Activated CD4-positive, alpha-beta T cell treated with anti-CD3 and anti-CD28 coated beads, Interleukin-2, amount 10 ng/mL, durations not matched to agents 24 days and 14 days (primary cell): ENCODE measurements at regions of chr16 and their contacts with region 1.

Region 1: GRCh38 chr16:53054670-53055485 is at the start of gene CHD9:
- DNase-seq: peak; percentile 93
- H3K4me3 Mint-ChIP-seq: peak within 1 kb of the TSS; percentile 86
- H3K27ac Mint-ChIP-seq: peak within 1 kb of the TSS; percentile 86
- H3K4me1 Mint-ChIP-seq: peaks cover 32% of the 10 kb centered on the region
- H3K27me3 Mint-ChIP-seq: no peaks in the 10 kb centered on the region
- total RNA-seq, gene CHD9: 19.6 and 20.7 TPM in 2 replicates

Region 2: DNA sequence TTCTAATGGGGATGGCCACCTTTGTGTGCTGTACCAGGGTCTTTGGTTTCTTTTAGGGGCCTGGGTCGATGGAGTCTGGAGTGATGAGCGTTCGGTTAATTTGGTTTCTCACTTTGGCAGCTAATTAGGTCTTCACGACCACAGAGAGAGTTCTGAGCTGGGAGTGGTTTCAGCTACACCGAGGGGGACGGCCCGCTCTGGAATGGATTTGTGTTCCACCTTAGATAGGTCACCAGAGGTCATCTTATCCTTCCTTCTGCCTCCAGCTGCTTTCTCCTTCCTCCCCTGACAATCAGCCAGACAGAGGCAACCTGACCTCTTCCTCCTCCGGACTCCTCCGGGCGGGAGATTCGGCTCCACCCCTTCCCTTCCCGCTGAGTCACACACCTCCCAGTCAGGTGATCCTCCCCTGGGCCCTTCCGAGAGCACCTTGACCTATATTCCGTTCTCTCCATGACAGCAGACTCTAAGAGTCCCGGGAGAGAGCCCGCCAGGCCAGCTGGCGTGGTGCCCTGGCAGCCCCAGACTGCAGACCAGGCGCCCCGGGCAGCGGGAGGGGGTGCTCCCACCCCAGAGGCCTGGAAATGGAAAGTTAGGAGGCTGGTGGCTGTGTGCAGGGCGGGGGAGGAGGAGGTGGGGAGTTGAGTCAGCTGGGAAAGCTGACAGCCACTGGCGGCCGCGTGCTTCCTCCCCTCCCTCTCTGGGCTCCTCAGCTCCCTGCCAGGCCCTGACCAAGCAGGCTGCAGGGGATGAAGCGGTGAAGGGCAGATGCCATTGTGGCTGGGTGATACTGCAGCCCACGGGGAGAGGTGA is 44.6 kb after region 1 on chr16:
- intact Hi-C with region 1: loop called (anchors 2 kb)
- DNase-seq: peak; percentile 84
- H3K4me3 Mint-ChIP-seq: peak overlapping the region; percentile 81
- H3K27ac Mint-ChIP-seq: peak overlapping the region; percentile 93
- H3K4me1 Mint-ChIP-seq: peaks cover 17% of the 10 kb centered on the region
- H3K27me3 Mint-ChIP-seq: no peaks in the 10 kb centered on the region

Region 3: DNA sequence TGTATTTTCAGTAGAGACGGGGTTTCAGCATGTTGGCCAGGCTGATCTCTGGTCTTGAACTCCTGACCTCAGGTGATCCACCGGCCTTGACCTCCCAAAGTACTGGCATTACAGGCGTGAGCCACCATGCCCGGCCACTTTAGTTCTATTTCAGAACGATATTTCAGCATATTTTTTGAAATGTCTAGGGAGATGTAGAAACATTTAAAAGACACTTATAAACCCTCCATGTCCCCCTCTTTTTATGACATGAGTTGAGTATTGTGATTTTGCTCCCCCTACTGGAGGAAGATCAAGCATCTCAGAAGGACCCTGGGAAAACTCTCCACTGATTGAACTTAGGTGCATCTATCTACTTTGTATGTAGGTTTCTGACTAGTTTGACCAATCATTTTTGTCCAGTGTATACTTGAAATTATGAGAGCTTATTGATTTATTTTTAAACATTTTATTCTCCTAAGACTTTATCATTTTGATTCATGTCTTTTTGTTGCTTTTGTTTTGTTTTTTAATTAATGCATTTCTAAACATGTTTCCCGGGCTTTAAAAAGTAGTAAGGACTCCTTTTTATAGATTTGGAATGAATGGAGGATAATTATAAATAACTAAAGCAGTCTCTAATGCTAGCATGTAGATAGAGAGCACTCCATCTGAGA is 105.0 kb after region 1 on chr16:
- intact Hi-C with region 1: loop called (anchors 1 kb)
- DNase-seq: peak; percentile 72
- H3K4me3 Mint-ChIP-seq: no peak overlapping the region
- H3K27ac Mint-ChIP-seq: no peak overlapping the region
- H3K4me1 Mint-ChIP-seq: no peaks in the 10 kb centered on the region
- H3K27me3 Mint-ChIP-seq: no peaks in the 10 kb centered on the region

Region 4: GRCh38 chr16:53282975-53283946 is 228.4 kb after region 1 on chr16:
- intact Hi-C with region 1: loop called (anchors 1 kb)
- DNase-seq: no peak
- H3K4me3 Mint-ChIP-seq: no peak overlapping the region
- H3K27ac Mint-ChIP-seq: no peak overlapping the region
- H3K4me1 Mint-ChIP-seq: no peaks in the 10 kb centered on the region
- H3K27me3 Mint-ChIP-seq: no peaks in the 10 kb centered on the region

Region 5: GRCh38 chr16:53435066-53435688 is 380.3 kb after region 1 on chr16:
- intact Hi-C with region 1: loop called (anchors 1 kb)
- DNase-seq: peak; percentile 91
- H3K4me3 Mint-ChIP-seq: peak overlapping the region; percentile 96
- H3K27ac Mint-ChIP-seq: peak overlapping the region; percentile 93
- H3K4me1 Mint-ChIP-seq: peaks cover 31% of the 10 kb centered on the region
- H3K27me3 Mint-ChIP-seq: no peaks in the 10 kb centered on the region

Region 6: GRCh38 chr16:53509906-53510703 is 455.2 kb after region 1 on chr16:
- intact Hi-C with region 1: loop called (anchors 5 kb)
- DNase-seq: peak; percentile 85
- H3K4me3 Mint-ChIP-seq: no peak overlapping the region
- H3K27ac Mint-ChIP-seq: no peak overlapping the region
- H3K4me1 Mint-ChIP-seq: peaks cover 20% of the 10 kb centered on the region
- H3K27me3 Mint-ChIP-seq: peaks cover 2% of the 10 kb centered on the region